Upper lobe of right lung (tissue), 1 donor: ENCODE measurements at regions of chr6 and their contacts with region 1.

Region 1: GRCh38 chr6:123702943-123703342 is 66.2 kb upstream of the TRDN start:
- DNase-seq: no peak
- ATAC-seq: no peak
- H3K4me3 ChIP-seq: no peak overlapping the region
- H3K27ac ChIP-seq: no peak overlapping the region
- H3K4me1 ChIP-seq: no peaks in the 10 kb centered on the region
- H3K27me3 ChIP-seq: no peaks in the 10 kb centered on the region
- CTCF ChIP-seq: no peak

Region 2: GRCh38 chr6:123402052-123402451 is 300.9 kb before region 1 on chr6:
- intact Hi-C with region 1: loop called (anchors 10 kb)
- DNase-seq: no peak
- ATAC-seq: no peak
- H3K4me3 ChIP-seq: no peak overlapping the region
- H3K27ac ChIP-seq: no peak overlapping the region
- H3K4me1 ChIP-seq: no peaks in the 10 kb centered on the region
- H3K27me3 ChIP-seq: no peaks in the 10 kb centered on the region
- CTCF ChIP-seq: no peak

Region 3: DNA sequence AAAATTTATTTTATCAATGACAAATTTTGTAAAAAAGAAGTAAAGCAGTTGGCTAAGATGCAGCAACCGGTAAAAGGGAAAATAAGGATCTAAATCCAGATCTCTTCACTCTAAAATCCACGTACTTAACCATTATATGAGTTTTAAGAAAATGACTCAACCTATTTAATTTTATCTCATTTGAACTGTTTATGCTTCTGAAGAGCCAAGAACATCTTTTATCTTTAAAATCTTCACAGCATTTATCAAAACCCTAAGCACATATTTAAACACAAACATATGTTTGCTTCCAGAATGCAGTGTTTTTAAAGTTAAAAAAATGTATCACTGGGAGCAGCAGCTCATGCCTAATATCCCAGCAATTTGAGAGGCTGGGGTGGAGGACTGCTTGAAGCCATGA is 439.9 kb after region 1 on chr6:
- intact Hi-C with region 1: no loop called
- DNase-seq: no peak
- ATAC-seq: no peak
- H3K4me3 ChIP-seq: no peak overlapping the region
- H3K27ac ChIP-seq: no peak overlapping the region
- H3K4me1 ChIP-seq: no peaks in the 10 kb centered on the region
- H3K27me3 ChIP-seq: no peaks in the 10 kb centered on the region
- CTCF ChIP-seq: no peak